ENCODE measurements at regions of chr3 and their contacts with region 1.

Region 1: GRCh38 chr3:196988241-196989029 is 19.8 kb upstream of the PIGZ start:
- DNase-seq: no peak
- ATAC-seq: peak; percentile 74

Region 2: GRCh38 chr3:196711838-196712513 is 276.5 kb before region 1 on chr3 and contains the starts of genes CEP19 and PIGX:
- intact Hi-C with region 1: no loop called
- DNase-seq: peak; percentile 93
- ATAC-seq: peak; percentile 99
- total RNA-seq, gene CEP19: 1.0 TPM
- total RNA-seq, gene PIGX: 14.1 TPM

Region 3: GRCh38 chr3:197186887-197187588 is 198.6 kb after region 1 on chr3:
- intact Hi-C with region 1: loop called (anchors 10 kb)
- DNase-seq: no peak
- ATAC-seq: peak; percentile 68